WTC11 (cell line): ENCODE measurements at regions of chr21 and their contacts with region 1.

Region 1: GRCh38 chr21:45439161-45439872 is 34.4 kb downstream of the COL18A1 start:
- DNase-seq: peak; percentile 87
- ATAC-seq: peak; percentile 87
- H3K4me3 Mint-ChIP-seq: no peak overlapping the region
- H3K27ac Mint-ChIP-seq: peak overlapping the region; percentile 72
- H3K4me1 Mint-ChIP-seq: peaks cover 22% of the 10 kb centered on the region
- H3K27me3 Mint-ChIP-seq: no peaks in the 10 kb centered on the region
- CTCF ChIP-seq: peak; percentile 97

Region 2: DNA sequence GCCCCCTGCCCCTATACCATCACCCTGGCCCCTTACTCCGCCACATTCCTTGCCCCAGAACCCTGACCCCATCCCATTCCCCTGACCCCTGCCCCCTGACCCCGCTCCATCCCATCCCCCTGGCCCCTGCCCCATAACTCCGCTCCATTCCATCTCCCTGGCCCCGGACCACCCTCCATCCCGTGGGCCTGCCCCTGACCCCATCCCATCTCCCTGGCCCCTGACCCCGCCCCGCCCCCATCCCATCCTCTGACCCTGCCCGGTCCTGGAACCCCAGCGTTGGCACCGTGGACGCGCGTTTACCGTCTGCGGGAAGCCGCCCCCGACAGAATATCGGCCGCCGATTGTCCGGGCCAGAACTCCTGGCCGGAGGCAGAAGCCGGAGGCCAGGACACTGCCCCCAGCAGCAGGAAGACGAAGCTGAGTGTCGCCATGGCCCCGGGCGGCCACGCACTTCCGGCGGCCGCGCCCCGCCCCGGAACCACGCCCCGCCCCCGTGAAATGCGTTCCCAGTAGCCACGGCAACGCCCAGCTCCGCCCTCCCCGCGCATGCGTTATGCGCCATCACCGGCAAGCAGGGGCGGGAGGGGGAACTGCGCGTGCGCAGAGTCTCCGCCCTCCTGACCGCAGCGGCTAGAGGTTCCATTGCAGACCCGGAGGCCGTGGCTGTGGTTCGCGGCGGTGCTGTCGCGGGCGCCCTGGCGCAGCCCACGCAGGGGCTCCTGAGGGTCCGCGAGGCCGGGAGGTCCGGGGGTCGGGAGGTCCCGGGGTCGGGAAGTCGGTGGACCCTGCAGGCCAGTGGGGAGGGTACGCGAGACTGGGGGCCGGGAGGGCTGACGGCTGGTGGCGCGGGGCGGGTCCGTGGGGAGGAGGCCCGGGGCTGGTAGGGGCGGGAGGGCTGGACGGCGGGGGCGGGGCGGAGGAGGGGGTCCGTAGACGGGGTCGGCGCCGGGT is 151.6 kb before region 1 on chr21 and contains the start of gene POFUT2:
- CTCF ChIA-PET with region 1: interaction called, 13 read pairs
- POLR2A ChIA-PET with region 1: interaction called, 3 read pairs
- DNase-seq: peak; percentile 98
- ATAC-seq: peak; percentile 56
- H3K4me3 Mint-ChIP-seq: peak within 1 kb of the TSS; percentile 74
- H3K27ac Mint-ChIP-seq: peak within 1 kb of the TSS; percentile 36; the same call in 1 of the 2 replicates
- H3K4me1 Mint-ChIP-seq: peaks cover 4% of the 10 kb centered on the region
- H3K27me3 Mint-ChIP-seq: no peaks in the 10 kb centered on the region
- CTCF ChIP-seq: no peak
- total RNA-seq, gene POFUT2: 37.1 to 41.4 TPM (median 39.7 TPM) in 3 replicates

Region 3: DNA sequence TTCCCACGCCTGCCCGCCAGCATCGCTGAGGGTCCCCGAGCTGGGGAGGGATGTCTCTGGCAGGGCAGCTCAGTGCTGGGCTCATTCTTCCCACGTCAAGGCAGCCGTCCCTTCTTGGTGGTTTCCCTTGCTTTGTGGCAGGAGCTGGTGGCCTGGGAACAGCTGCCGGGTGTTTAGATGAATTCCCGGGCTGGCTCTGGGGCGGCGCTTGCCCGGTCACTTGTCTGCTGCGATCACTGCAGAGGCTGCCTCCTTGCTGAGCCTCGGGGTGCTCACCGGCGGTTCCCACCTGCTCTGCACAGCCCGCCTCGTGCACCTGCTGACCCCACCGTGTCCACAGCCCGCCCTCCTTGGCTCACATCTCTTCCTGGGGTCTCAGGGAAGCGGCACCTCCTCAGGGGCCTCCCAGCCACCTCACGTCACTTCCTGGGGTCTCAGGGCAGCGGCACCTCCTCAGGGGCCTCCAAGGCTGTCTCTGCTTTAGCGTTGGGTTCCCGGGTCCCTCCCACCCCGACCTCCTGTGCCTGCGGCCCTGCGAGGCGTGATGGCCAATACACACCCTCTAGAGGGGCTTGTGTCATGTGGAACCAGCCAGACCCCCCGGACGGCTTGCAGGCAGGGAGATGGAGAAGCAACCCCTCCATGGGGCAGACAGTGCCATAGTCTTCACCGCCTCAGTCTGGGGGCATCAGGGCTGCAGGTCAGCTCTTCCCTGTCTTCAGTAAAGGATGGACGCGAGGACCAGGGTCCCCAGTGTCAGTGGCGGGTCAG is 20.8 kb before region 1 on chr21:
- CTCF ChIA-PET with region 1: interaction called, 12 read pairs
- POLR2A ChIA-PET with region 1: no interaction called
- DNase-seq: peak; percentile 9
- ATAC-seq: no peak
- H3K4me3 Mint-ChIP-seq: no peak overlapping the region
- H3K27ac Mint-ChIP-seq: peak overlapping the region; percentile 87
- H3K4me1 Mint-ChIP-seq: peaks cover 47% of the 10 kb centered on the region
- H3K27me3 Mint-ChIP-seq: no peaks in the 10 kb centered on the region
- CTCF ChIP-seq: no peak

Region 4: GRCh38 chr21:45427331-45428271 is 11.7 kb before region 1 on chr21:
- CTCF ChIA-PET with region 1: interaction called, 13 read pairs
- POLR2A ChIA-PET with region 1: no interaction called
- DNase-seq: peak; percentile 66
- ATAC-seq: peak; percentile 46
- H3K4me3 Mint-ChIP-seq: no peak overlapping the region
- H3K27ac Mint-ChIP-seq: peak overlapping the region; percentile 70
- H3K4me1 Mint-ChIP-seq: peaks cover 41% of the 10 kb centered on the region
- H3K27me3 Mint-ChIP-seq: no peaks in the 10 kb centered on the region
- CTCF ChIP-seq: no peak

Region 5: DNA sequence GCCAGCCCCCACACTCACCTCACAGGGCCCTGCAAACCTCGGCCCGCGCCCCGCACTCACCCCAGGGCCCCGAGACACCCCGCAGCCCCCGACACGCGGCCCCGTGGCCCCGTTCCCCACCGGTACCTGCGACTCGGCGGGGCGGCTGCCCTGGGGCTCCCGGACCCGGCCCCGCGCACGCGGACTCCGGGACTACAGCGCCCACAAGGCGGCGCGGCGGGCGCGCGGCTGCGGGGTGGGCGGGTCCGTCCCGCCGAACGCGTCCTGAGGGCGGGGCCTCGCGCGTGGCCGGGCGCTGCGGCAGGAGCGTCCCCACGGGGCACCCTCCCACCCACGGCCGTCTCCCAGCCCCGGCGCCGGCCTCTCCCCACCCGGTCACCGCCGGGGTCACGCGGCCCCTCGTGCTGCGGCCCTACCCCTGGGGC is 102.9 kb after region 1 on chr21 and contains the start of gene SLC19A1:
- CTCF ChIA-PET with region 1: no interaction called
- POLR2A ChIA-PET with region 1: no interaction called
- DNase-seq: peak; percentile 45
- ATAC-seq: peak; percentile 58
- H3K4me3 Mint-ChIP-seq: peak within 1 kb of the TSS; percentile 64
- H3K27ac Mint-ChIP-seq: no peak within 1 kb of the TSS
- H3K4me1 Mint-ChIP-seq: peaks cover 7% of the 10 kb centered on the region; the same call in 1 of the 2 replicates
- H3K27me3 Mint-ChIP-seq: peaks cover 9% of the 10 kb centered on the region
- CTCF ChIP-seq: no peak
- total RNA-seq, gene SLC19A1: 27.7 to 29.8 TPM (median 28.3 TPM) in 3 replicates